Caco-2 (cell line): ENCODE measurements at regions of chr14 and their contacts with region 1.

Region 1: DNA sequence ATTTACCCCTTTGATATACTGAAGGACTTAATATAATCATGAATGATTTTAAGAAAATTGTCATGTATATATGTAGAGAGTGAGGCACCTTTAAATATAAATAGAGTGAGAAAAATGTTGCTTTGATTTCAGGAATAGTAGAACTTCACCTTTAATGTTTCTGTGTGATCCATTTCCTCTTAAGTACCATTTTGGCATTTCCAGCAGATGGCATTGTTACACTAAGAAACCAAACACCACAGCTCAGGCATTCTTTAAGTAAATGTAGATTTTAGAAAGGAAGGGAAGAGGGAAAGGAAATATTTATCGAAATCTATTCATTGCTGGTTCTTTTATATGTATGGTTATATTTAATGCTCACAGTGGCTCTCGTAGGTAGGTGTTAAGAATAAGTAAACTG is 556.7 kb upstream of the FBXO33 start:
- DNase-seq: peak in 1 of 2 experiments; percentile 38
- H3K4me3 ChIP-seq: no peak overlapping the region
- H3K4me3 Mint-ChIP-seq: no peak overlapping the region
- H3K27ac Mint-ChIP-seq: no peak overlapping the region
- H3K4me1 ChIP-seq: no peaks in the 10 kb centered on the region
- H3K4me1 Mint-ChIP-seq: no peaks in the 10 kb centered on the region
- H3K27me3 ChIP-seq: no peaks in the 10 kb centered on the region
- H3K27me3 Mint-ChIP-seq: no peaks in the 10 kb centered on the region
- CTCF ChIP-seq: peak; percentile 49 to 58

Region 2: DNA sequence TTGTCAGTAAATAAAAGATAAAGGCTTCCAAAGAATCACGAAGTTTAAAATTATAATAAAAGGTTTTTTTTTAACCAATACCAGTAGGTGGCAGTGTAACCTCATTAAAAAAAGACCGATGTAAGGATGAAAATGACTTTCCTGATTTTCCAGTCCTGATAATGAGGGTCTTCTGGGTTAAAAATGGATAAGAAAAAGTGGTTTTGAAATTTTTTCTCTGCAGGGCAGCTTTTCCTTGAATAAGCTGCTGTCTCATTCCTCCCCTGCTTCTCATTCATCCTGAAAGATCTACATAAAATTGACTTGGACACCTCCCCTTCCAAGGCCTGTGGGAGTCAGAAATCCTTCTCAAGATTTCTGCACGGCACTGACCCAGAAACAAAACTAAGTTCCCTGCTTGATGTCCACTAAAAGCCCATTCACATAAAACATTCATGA is 497.8 kb before region 1 on chr14:
- CTCF ChIA-PET with region 1: no interaction called
- POLR2A ChIA-PET with region 1: no interaction called
- intact Hi-C with region 1: loop called (anchors 5 kb)
- DNase-seq: peak in 1 of 2 experiments; percentile 43
- H3K4me3 ChIP-seq: no peak overlapping the region
- H3K4me3 Mint-ChIP-seq: no peak overlapping the region
- H3K27ac Mint-ChIP-seq: peak overlapping the region; percentile 55
- H3K4me1 ChIP-seq: peaks cover 9% of the 10 kb centered on the region; the same call in 1 of the 2 replicates
- H3K4me1 Mint-ChIP-seq: peaks cover 11% of the 10 kb centered on the region
- H3K27me3 ChIP-seq: no peaks in the 10 kb centered on the region
- H3K27me3 Mint-ChIP-seq: no peaks in the 10 kb centered on the region
- CTCF ChIP-seq: peak; percentile 22 to 36

Region 3: DNA sequence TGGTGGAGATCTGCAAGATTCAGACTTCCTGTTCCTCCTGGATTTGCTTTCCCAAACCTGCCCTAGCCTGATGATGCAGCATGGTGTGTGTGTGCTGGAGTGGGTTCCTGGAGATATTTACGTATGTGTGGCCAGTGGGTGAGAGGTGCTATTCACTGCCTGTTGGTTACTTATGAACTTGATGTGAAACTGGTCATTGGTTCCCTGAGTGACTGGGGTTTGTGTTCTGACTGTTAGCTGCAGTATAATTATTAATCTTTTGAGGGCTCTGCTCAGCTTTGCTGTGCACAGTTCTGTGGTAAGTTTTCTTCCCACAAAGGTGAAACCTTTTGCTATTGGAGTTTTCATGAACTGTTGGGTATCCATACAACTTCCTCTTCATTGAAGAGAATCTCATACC is 14.9 kb before region 1 on chr14:
- CTCF ChIA-PET with region 1: no interaction called
- POLR2A ChIA-PET with region 1: no interaction called
- intact Hi-C with region 1: no loop called
- DNase-seq: no peak
- H3K4me3 ChIP-seq: no peak overlapping the region
- H3K4me3 Mint-ChIP-seq: no peak overlapping the region
- H3K27ac Mint-ChIP-seq: no peak overlapping the region
- H3K4me1 ChIP-seq: no peaks in the 10 kb centered on the region
- H3K4me1 Mint-ChIP-seq: no peaks in the 10 kb centered on the region
- H3K27me3 ChIP-seq: no peaks in the 10 kb centered on the region
- H3K27me3 Mint-ChIP-seq: no peaks in the 10 kb centered on the region
- CTCF ChIP-seq: no peak

Region 4: GRCh38 chr14:40280652-40281051 is 291.7 kb after region 1 on chr14:
- CTCF ChIA-PET with region 1: no interaction called
- POLR2A ChIA-PET with region 1: no interaction called
- intact Hi-C with region 1: loop called (anchors 1 kb)
- DNase-seq: no peak
- H3K4me3 ChIP-seq: no peak overlapping the region
- H3K4me3 Mint-ChIP-seq: no peak overlapping the region
- H3K27ac Mint-ChIP-seq: no peak overlapping the region
- H3K4me1 ChIP-seq: no peaks in the 10 kb centered on the region
- H3K4me1 Mint-ChIP-seq: no peaks in the 10 kb centered on the region
- H3K27me3 ChIP-seq: no peaks in the 10 kb centered on the region
- H3K27me3 Mint-ChIP-seq: no peaks in the 10 kb centered on the region
- CTCF ChIP-seq: peak in 1 of 2 experiments; percentile 11

Region 5: GRCh38 chr14:40417777-40418401 is 428.9 kb after region 1 on chr14:
- CTCF ChIA-PET with region 1: no interaction called
- POLR2A ChIA-PET with region 1: no interaction called
- intact Hi-C with region 1: loop called (anchors 10 kb)
- DNase-seq: peak; percentile 50 to 55
- H3K4me3 ChIP-seq: no peak overlapping the region
- H3K4me3 Mint-ChIP-seq: no peak overlapping the region
- H3K27ac Mint-ChIP-seq: no peak overlapping the region
- H3K4me1 ChIP-seq: no peaks in the 10 kb centered on the region
- H3K4me1 Mint-ChIP-seq: no peaks in the 10 kb centered on the region
- H3K27me3 ChIP-seq: no peaks in the 10 kb centered on the region
- H3K27me3 Mint-ChIP-seq: no peaks in the 10 kb centered on the region
- CTCF ChIP-seq: peak; percentile 47 to 66

Region 6: GRCh38 chr14:40487824-40488223 is 498.9 kb after region 1 on chr14:
- CTCF ChIA-PET with region 1: no interaction called
- POLR2A ChIA-PET with region 1: no interaction called
- intact Hi-C with region 1: loop called (anchors 5 kb)
- DNase-seq: no peak
- H3K4me3 ChIP-seq: no peak overlapping the region
- H3K4me3 Mint-ChIP-seq: no peak overlapping the region
- H3K27ac Mint-ChIP-seq: no peak overlapping the region
- H3K4me1 ChIP-seq: peaks cover 12% of the 10 kb centered on the region
- H3K4me1 Mint-ChIP-seq: no peaks in the 10 kb centered on the region
- H3K27me3 ChIP-seq: no peaks in the 10 kb centered on the region
- H3K27me3 Mint-ChIP-seq: no peaks in the 10 kb centered on the region
- CTCF ChIP-seq: no peak

Region 7: GRCh38 chr14:41604721-41605531 is 1616.0 kb after region 1 on chr14:
- CTCF ChIA-PET with region 1: interaction called, 3 read pairs
- POLR2A ChIA-PET with region 1: no interaction called
- intact Hi-C with region 1: loop called (anchors 5 kb)
- DNase-seq: no peak
- H3K4me3 ChIP-seq: no peak overlapping the region
- H3K4me3 Mint-ChIP-seq: no peak overlapping the region
- H3K27ac Mint-ChIP-seq: no peak overlapping the region
- H3K4me1 ChIP-seq: no peaks in the 10 kb centered on the region
- H3K4me1 Mint-ChIP-seq: no peaks in the 10 kb centered on the region
- H3K27me3 ChIP-seq: no peaks in the 10 kb centered on the region
- H3K27me3 Mint-ChIP-seq: no peaks in the 10 kb centered on the region
- CTCF ChIP-seq: no peak